ENCODE measurements at regions of chr12 and their contacts with region 1.

Region 1: GRCh38 chr12:106919910-106920544 is 35.7 kb upstream of the TMEM263 start:
- DNase-seq: peak; percentile 16
- H3K4me3 ChIP-seq: no peak overlapping the region
- H3K27ac ChIP-seq: no peak overlapping the region
- H3K27me3 ChIP-seq: peaks cover 7% of the 10 kb centered on the region
- CTCF ChIP-seq: peak; percentile 68

Region 2: GRCh38 chr12:106357549-106358395 is 562.3 kb before region 1 on chr12 and contains the start of gene POLR3B:
- CTCF ChIA-PET with region 1: interaction called, 41 read pairs
- POLR2A ChIA-PET with region 1: no interaction called
- DNase-seq: peak; percentile 92
- H3K4me3 ChIP-seq: peak within 1 kb of the TSS; percentile 92
- H3K27ac ChIP-seq: peak within 1 kb of the TSS; percentile 97
- H3K27me3 ChIP-seq: peaks cover 2% of the 10 kb centered on the region
- CTCF ChIP-seq: peak; percentile 95
- polyA plus RNA-seq, gene POLR3B: 11.0 and 14.1 TPM in 2 replicates

Region 3: GRCh38 chr12:106386813-106387535 is 533.1 kb before region 1 on chr12:
- CTCF ChIA-PET with region 1: interaction called, 72 read pairs
- POLR2A ChIA-PET with region 1: no interaction called
- DNase-seq: peak; percentile 24
- H3K4me3 ChIP-seq: no peak overlapping the region
- H3K27ac ChIP-seq: no peak overlapping the region
- H3K27me3 ChIP-seq: no peaks in the 10 kb centered on the region
- CTCF ChIP-seq: no peak

Region 4: GRCh38 chr12:106682592-106683234 is 237.3 kb before region 1 on chr12:
- CTCF ChIA-PET with region 1: interaction called, 11 read pairs
- POLR2A ChIA-PET with region 1: no interaction called
- DNase-seq: no peak
- H3K4me3 ChIP-seq: no peak overlapping the region
- H3K27ac ChIP-seq: no peak overlapping the region
- H3K27me3 ChIP-seq: peaks cover 2% of the 10 kb centered on the region
- CTCF ChIP-seq: peak; percentile 39

Region 5: GRCh38 chr12:106903241-106903945 is 16.6 kb before region 1 on chr12:
- CTCF ChIA-PET with region 1: interaction called, 17 read pairs
- POLR2A ChIA-PET with region 1: no interaction called
- DNase-seq: no peak
- H3K4me3 ChIP-seq: peak overlapping the region; percentile 58
- H3K27ac ChIP-seq: no peak overlapping the region
- H3K27me3 ChIP-seq: peaks cover 11% of the 10 kb centered on the region
- CTCF ChIP-seq: no peak

Region 6: GRCh38 chr12:107287436-107288413 is 367.7 kb after region 1 on chr12:
- CTCF ChIA-PET with region 1: no interaction called
- POLR2A ChIA-PET with region 1: no interaction called
- DNase-seq: no peak
- H3K4me3 ChIP-seq: no peak overlapping the region
- H3K27ac ChIP-seq: no peak overlapping the region
- H3K27me3 ChIP-seq: no peaks in the 10 kb centered on the region
- CTCF ChIP-seq: no peak